ENCODE measurements at regions of chr6 and their contacts with region 1.

Region 1: GRCh38 chr6:158869826-158870648 is 50.9 kb upstream of the EZR start:
- DNase-seq: peak; percentile 93

Region 2: GRCh38 chr6:158819213-158819909 is 50.7 kb before region 1 on chr6 and contains the start of gene EZR:
- intact Hi-C with region 1: loop called (anchors 2 kb)
- DNase-seq: peak; percentile 87
- total RNA-seq, gene EZR: 141 TPM

Region 3: DNA sequence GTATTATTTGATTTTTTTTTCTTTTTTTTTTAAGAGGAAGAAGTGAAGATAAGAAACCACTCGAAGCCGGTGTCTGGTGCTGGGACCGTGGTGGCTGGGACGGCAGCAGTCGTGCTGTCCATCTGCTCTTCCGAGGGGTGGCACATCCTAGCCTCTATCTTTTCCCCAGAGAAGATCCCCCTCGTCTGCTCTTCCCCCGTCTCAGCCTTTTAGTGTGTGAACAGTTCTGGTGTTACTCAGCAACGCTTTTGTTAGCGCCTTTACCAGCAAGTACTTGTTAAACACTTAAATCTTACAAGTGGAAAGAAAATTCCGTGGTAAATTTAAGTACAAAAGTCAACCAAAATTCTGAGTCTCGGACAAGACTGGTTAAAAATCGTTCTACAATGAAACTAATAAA is 39.9 kb after region 1 on chr6:
- intact Hi-C with region 1: no loop called
- DNase-seq: no peak